MCF 10A (cell line): ENCODE measurements at regions of chr16 and their contacts with region 1.

Region 1: DNA sequence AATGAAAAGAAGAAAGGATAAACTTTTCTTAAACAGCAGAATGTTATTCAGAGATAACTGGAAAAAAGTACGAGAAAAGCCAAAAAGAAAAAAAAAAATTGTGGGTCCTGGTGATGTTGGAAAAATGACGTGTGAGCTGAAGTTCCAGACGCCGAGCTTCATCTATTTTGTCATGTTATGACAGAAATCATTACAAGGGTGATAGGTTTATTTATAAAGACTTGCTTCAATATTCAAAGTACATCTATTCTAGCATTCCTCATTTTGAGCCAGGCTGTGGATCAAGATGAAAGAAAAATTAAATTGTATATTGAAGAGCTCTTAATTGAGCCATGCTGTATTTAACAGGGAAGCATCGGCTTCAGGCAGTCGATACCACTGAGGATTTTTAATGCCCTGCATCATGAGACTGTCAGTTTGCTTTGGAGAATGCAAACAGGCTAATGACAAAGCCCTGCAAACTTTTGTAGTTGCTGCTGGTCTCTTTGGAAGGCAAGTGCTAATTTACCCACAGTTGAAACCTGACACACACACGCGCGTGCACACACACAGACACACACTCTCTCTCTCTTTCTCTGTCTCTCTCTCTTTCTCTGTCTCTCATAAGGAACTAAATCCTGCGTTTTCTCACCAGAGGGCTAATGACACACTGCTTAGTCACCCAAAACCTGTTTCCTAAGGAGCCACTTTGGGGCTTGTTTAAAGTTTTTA is 110.7 kb downstream of the WWOX start:
- DNase-seq: peak; percentile 66
- H3K4me3 Mint-ChIP-seq: peak overlapping the region; percentile 21
- H3K27ac Mint-ChIP-seq: peak overlapping the region; percentile 73
- H3K4me1 Mint-ChIP-seq: peaks cover 32% of the 10 kb centered on the region
- H3K27me3 Mint-ChIP-seq: no peaks in the 10 kb centered on the region
- CTCF ChIP-seq: no peak

Region 2: DNA sequence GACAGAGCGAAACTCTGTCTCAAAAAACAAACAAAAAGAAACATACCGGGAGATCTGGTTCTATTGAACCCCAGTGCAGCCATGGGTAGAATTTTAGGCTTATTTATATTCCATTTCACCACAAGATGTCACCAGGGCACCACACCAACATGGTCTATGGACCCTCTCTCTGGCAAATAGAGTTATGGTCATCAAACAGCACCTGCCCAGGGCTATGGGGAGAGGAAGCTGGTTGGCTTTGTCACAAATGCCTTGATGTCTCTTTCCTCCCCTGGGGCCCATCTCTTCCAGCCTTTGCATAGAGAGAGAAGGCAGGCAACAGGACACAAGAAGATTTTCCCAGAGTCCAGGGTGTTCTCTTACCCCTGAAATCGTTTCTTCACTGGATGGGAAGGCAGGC is 17.7 kb after region 1 on chr16:
- CTCF ChIA-PET with region 1: interaction called, 8 read pairs
- POLR2A ChIA-PET with region 1: interaction called, 12 read pairs
- intact Hi-C with region 1: no loop called
- DNase-seq: no peak
- H3K4me3 Mint-ChIP-seq: no peak overlapping the region
- H3K27ac Mint-ChIP-seq: no peak overlapping the region
- H3K4me1 Mint-ChIP-seq: peaks cover 9% of the 10 kb centered on the region
- H3K27me3 Mint-ChIP-seq: no peaks in the 10 kb centered on the region
- CTCF ChIP-seq: peak; percentile 11

Region 3: DNA sequence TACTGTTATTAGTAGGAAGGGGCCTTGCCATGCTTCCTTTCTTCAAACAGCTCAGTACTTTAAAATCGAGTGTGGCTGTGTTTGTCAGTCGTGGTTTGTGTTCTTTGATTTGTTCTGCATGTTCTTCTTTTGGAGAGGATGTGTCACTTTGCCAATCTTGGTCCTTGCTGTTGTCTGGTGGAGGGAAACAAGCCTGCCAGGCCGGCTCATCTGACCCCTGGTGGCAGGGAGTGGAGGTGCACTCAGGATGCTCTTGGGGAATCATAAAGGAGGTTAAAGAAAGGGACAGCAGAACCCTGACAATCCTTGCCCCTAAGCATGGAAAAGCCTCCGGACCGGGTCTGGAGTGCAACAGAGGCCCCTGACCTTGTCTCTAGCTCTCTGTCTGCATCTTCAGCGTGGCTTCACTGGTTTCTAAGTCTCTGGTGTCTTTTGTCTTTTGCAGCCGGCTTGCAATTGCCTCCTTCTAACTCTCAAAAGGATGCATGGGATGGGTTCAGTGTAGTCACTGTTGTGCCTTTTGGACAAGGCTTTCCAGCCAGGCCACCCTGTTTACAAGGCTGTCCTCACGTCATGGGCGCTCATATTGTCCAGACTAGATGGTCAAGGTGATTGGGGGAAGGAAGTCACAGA is 25.2 kb after region 1 on chr16:
- CTCF ChIA-PET with region 1: interaction called, 19 read pairs
- POLR2A ChIA-PET with region 1: interaction called, 12 read pairs
- intact Hi-C with region 1: no loop called
- DNase-seq: peak; percentile 72
- H3K4me3 Mint-ChIP-seq: no peak overlapping the region
- H3K27ac Mint-ChIP-seq: no peak overlapping the region
- H3K4me1 Mint-ChIP-seq: peaks cover 15% of the 10 kb centered on the region
- H3K27me3 Mint-ChIP-seq: no peaks in the 10 kb centered on the region
- CTCF ChIP-seq: peak; percentile 76

Region 4: DNA sequence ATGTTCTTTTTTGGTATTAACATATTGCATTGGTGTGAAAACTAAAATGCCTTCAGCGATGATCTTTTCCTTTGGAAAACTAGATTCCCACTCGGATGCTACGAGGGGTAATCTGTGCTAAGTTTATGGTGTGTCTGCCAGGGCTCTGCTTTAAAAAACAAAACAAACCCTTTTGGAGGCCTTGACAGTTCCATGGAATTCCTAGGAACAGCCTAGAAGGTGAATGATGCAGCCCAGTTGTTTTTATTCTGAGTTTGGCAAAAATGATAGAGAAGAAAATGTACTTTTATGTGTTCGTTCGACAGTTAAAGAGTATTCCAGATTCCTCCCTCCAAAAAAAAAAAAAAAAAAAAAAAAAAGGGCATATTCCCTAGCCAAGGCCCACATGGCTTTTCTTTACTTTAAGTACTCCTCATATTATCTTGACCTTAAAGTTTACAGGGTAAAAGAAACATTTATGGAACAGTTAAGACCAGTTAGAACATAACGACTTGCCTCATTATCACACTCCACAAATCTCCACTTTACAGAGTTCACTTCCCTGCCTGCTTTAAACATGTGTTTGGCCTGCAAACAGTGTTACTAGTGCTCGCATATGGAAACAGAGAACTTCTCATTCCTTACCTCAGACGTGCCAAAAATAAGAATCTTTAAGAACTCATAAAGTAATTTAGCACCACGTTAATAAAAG is 48.4 kb after region 1 on chr16:
- CTCF ChIA-PET with region 1: no interaction called
- POLR2A ChIA-PET with region 1: no interaction called
- intact Hi-C with region 1: no loop called
- DNase-seq: no peak
- H3K4me3 Mint-ChIP-seq: no peak overlapping the region
- H3K27ac Mint-ChIP-seq: no peak overlapping the region
- H3K4me1 Mint-ChIP-seq: no peaks in the 10 kb centered on the region
- H3K27me3 Mint-ChIP-seq: no peaks in the 10 kb centered on the region
- CTCF ChIP-seq: no peak